Activated CD4-positive, alpha-beta memory T cell treated with anti-CD3 and anti-CD28 coated beads for 36 hours (primary cell): ENCODE measurements at regions of chr12 and their contacts with region 1.

Region 1: DNA sequence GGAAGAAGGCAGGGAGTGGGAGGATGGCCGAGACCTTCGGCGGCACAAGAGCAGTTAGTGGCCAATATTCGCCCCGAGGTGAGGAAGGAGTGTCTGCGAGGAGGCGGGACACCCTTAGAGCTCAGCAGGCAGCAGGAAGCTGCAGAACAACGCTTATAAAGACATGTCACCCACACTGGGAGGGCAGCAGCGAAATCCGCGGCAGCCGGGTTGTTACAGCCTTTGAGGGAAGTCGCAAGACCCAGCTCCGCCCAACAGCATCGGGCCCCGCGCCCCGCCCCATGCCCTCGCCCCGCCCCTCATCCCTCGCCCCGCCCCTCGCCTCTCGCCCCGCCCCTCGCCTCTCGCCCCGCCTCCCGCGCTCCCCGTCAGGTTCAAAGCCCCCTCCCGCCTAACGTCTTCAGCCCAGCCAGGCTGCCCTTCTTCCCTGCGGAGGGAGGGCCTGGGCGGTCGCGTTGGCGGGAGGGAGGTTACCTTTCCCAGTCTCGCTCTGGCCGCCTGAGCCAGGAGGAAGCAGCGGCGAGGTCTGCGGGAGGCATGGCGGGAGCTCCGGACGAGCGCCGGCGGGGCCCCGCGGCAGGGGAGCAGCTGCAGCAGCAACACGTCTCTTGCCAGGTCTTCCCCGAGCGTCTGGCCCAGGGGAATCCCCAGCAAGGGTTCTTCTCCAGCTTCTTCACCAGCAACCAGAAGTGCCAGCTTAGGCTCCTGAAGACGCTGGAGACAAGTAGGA is at the start of gene ATP23:
- DNase-seq: peak; percentile 92
- H3K4me3 Mint-ChIP-seq: peak within 1 kb of the TSS; percentile 86
- H3K27ac Mint-ChIP-seq: peak within 1 kb of the TSS; percentile 93
- H3K4me1 Mint-ChIP-seq: peaks cover 43% of the 10 kb centered on the region
- H3K27me3 Mint-ChIP-seq: no peaks in the 10 kb centered on the region
- total RNA-seq, gene ATP23: 14.9 to 16.3 TPM

Region 2: GRCh38 chr12:57487597-57488401 is 453.5 kb before region 1 on chr12 and contains the start of gene MARS1:
- CTCF ChIA-PET with region 1: no interaction called
- POLR2A ChIA-PET with region 1: no interaction called
- intact Hi-C with region 1: no loop called
- DNase-seq: peak; percentile 96
- H3K4me3 Mint-ChIP-seq: peak within 1 kb of the TSS; percentile 97
- H3K27ac Mint-ChIP-seq: peak within 1 kb of the TSS; percentile 94
- H3K4me1 Mint-ChIP-seq: peaks cover 40% of the 10 kb centered on the region
- H3K27me3 Mint-ChIP-seq: no peaks in the 10 kb centered on the region
- total RNA-seq, gene MARS1: 354 to 364 TPM

Region 3: DNA sequence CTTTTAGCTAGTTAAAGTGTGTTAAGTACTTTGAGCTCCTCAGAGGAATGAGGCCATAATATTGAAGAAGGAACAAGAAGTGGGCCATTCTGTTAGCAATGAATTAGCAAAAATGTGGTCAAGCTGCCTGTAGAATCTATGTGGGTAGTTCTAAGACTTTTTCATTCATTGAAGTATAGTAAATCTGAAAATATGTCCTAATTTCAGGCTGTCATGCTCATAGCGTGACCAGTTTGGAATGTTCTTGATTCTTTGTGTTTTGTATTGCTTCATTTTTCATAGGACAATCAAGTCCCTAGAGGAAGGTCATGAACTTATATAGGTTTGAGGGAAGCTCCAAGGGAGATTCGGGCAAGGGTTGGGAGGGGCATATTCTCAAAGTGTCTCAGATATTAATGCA is 11.4 kb after region 1 on chr12:
- CTCF ChIA-PET with region 1: no interaction called
- POLR2A ChIA-PET with region 1: no interaction called
- intact Hi-C with region 1: no loop called
- DNase-seq: no peak
- H3K4me3 Mint-ChIP-seq: no peak overlapping the region
- H3K27ac Mint-ChIP-seq: no peak overlapping the region
- H3K4me1 Mint-ChIP-seq: peaks cover 8% of the 10 kb centered on the region
- H3K27me3 Mint-ChIP-seq: no peaks in the 10 kb centered on the region

Region 4: GRCh38 chr12:57965766-57966165 is 24.4 kb after region 1 on chr12:
- CTCF ChIA-PET with region 1: no interaction called
- POLR2A ChIA-PET with region 1: no interaction called
- intact Hi-C with region 1: no loop called
- DNase-seq: no peak
- H3K4me3 Mint-ChIP-seq: no peak overlapping the region
- H3K27ac Mint-ChIP-seq: no peak overlapping the region
- H3K4me1 Mint-ChIP-seq: no peaks in the 10 kb centered on the region
- H3K27me3 Mint-ChIP-seq: no peaks in the 10 kb centered on the region

Region 5: GRCh38 chr12:58425481-58426392 is 484.4 kb after region 1 on chr12:
- CTCF ChIA-PET with region 1: no interaction called
- POLR2A ChIA-PET with region 1: no interaction called
- intact Hi-C with region 1: loop called (anchors 2 kb)
- DNase-seq: peak; percentile 44
- H3K4me3 Mint-ChIP-seq: no peak overlapping the region
- H3K27ac Mint-ChIP-seq: peak overlapping the region; percentile 89
- H3K4me1 Mint-ChIP-seq: peaks cover 31% of the 10 kb centered on the region
- H3K27me3 Mint-ChIP-seq: peaks cover 9% of the 10 kb centered on the region